Cardiac septum (tissue), 1 donor: ENCODE measurements at regions of chr7 and their contacts with region 1.

Region 1: GRCh38 chr7:99374103-99375064 is at the start of gene ARPC1B:
- DNase-seq: peak; percentile 95
- total RNA-seq, gene ARPC1B: 40.4 TPM

Region 2: GRCh38 chr7:99357701-99358490 is 16.5 kb before region 1 on chr7:
- intact Hi-C with region 1: no loop called
- DNase-seq: no peak

Region 3: DNA sequence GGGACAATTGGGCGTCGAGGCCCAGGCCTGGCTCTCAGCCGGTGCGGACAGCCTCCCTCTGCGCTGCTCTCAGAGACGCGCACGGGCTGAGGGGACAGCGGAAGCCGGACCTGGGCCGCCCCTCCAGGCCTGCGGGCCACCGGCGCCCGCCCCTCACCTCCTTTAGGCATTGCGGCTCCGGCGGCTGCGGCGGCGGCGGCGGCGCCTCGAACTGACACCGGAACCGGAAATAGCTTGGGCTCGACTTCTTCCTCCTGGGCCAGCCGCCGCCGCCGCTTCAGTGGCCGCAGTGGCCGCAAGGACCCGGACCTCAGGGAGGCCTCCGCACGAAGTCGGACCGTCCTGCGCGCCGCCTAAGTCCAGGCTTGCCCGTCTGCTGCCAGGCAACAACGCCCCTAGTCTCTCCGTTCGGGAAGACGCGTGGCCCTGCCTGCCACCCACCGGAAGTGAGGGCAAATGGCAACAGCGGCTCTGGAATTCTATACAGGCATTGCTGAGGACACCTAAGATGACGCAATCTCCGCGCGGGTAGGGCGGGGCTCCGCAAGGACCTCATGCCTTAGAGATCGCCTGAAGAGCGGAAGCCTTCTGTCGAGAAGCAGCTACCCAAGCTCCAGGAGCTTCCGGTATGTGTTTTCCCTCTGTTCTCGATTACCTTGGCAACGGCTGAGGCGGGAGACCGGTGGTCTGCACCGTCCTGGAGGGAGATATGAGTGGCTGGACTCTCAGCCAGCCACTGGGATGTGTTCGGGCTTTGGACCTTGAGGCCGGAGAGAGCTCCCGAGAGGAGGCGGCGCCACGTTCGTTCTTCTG is 34.2 kb after region 1 on chr7 and contains the starts of genes BUD31 and PDAP1:
- intact Hi-C with region 1: loop called (anchors 2 kb)
- DNase-seq: peak; percentile 97
- total RNA-seq, gene BUD31: 46.5 TPM
- total RNA-seq, gene PDAP1: 95.6 TPM

Region 4: DNA sequence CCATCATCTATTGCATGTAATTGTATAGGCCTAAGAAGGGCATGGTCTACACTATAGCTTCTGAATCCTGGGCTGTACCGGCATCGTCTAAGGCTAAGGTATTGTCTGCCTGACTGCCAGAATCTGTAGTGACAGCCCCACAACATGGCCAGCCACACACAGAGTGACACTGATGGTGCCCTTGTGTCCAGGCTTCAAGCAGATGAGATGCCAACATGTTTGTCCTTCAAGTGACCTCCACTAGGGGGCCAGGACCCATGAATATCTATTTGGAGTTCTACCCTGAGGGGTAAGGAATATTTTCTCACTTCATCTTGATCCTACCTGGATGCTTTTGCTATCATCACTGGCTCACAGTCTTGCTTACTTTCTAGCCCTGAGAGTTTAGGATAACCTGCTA is 359.1 kb after region 1 on chr7:
- intact Hi-C with region 1: no loop called
- DNase-seq: no peak